ENCODE measurements at regions of chr4 and their contacts with region 1.

Region 1: DNA sequence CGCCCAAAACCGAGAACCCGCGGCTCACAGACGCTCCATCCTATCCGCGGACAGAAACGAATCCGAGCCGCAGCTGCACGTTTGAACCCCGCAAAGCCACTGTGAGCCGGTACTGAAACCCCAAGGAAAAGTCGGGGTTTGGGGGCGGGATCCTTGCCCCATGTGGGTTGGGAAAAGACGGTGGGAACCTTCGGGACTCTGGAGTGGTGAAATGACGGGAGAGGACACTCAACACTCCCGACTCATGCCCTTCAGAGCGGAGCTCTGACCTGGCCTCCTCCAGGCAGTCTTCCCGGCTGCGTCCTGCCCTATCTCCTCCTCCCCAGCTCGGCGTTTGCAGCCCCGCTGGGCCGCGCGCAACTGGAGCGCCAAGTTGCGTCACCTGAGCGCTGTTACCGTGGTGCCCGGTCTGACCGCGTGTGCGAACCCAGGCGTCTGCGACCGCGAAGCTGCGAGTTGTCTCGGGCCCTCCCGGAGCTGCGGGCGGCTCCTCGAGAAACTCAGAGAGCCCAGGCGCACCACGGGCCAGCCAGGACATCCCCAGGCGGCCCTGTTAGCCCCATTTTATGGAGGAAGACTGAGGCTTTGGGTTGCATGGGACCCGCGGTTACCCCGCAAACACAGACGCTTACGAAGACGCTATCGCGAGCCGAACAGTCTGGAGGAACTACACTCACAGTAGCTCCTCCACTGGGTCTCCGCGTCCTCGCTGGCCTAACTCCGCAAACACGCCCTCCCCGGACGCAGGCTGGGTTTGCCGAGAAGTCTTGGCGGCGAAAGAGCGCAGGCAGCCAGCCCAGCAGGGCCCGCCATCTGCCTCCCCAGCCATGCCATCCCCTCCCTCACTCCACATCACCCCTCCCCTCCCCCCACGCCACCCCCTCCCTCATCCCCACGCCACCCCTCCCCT is 20.3 kb upstream of the HMX1 start:
- DNase-seq: peak; percentile 42
- ATAC-seq: no peak
- H3K4me3 Mint-ChIP-seq: no peak overlapping the region
- H3K27ac Mint-ChIP-seq: no peak overlapping the region
- H3K4me1 Mint-ChIP-seq: no peaks in the 10 kb centered on the region
- H3K27me3 Mint-ChIP-seq: peaks cover 47% of the 10 kb centered on the region

Region 2: DNA sequence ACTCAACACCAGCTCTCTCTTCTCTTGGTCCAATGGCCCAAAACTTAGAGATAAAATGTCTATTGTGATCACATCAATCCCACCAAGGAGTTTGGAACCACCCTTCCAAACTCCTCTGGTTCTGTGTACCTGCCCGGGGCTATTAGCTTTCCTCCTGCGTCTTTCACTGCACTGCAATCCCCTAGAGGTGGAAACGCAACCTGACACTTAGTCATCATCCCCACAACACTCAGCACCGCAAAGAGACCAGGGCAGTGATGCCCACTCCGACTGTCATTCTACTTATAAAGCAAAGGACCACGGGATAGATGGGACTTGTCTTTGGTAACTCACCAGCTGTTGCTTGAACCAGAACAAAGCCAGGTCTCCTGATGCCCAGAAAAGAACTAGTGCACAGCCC is 974.2 kb before region 1 on chr4:
- CTCF ChIA-PET with region 1: no interaction called
- POLR2A ChIA-PET with region 1: no interaction called
- intact Hi-C with region 1: no loop called
- DNase-seq: no peak
- ATAC-seq: no peak
- H3K4me3 Mint-ChIP-seq: no peak overlapping the region
- H3K27ac Mint-ChIP-seq: no peak overlapping the region
- H3K4me1 Mint-ChIP-seq: peaks cover 23% of the 10 kb centered on the region
- H3K27me3 Mint-ChIP-seq: no peaks in the 10 kb centered on the region

Region 3: DNA sequence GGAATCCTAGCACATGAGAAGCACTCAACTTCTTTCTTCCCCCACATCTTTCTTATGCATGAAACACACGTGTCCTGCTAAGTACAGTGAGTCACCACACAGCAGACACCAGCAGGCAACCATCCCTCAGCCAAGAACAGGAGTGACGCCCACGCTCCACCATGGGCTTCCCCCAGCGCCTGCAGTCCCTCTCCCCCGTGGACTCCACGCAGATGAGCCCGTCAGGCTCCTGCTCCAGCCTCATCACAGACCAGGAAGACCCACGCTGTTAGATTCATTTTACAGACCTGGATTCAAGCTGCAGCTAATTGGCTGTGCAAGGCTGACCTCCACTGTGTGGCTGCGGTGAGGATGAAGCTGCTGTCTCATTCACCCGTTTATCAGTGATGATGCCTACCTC is 37.0 kb before region 1 on chr4:
- CTCF ChIA-PET with region 1: no interaction called
- POLR2A ChIA-PET with region 1: no interaction called
- intact Hi-C with region 1: loop called in 1 of 2 experiments (anchors 5 kb)
- DNase-seq: no peak
- ATAC-seq: no peak
- H3K4me3 Mint-ChIP-seq: no peak overlapping the region
- H3K27ac Mint-ChIP-seq: no peak overlapping the region
- H3K4me1 Mint-ChIP-seq: no peaks in the 10 kb centered on the region
- H3K27me3 Mint-ChIP-seq: peaks cover 44% of the 10 kb centered on the region